ENCODE measurements at regions of chr16 and their contacts with region 1.

Region 1: DNA sequence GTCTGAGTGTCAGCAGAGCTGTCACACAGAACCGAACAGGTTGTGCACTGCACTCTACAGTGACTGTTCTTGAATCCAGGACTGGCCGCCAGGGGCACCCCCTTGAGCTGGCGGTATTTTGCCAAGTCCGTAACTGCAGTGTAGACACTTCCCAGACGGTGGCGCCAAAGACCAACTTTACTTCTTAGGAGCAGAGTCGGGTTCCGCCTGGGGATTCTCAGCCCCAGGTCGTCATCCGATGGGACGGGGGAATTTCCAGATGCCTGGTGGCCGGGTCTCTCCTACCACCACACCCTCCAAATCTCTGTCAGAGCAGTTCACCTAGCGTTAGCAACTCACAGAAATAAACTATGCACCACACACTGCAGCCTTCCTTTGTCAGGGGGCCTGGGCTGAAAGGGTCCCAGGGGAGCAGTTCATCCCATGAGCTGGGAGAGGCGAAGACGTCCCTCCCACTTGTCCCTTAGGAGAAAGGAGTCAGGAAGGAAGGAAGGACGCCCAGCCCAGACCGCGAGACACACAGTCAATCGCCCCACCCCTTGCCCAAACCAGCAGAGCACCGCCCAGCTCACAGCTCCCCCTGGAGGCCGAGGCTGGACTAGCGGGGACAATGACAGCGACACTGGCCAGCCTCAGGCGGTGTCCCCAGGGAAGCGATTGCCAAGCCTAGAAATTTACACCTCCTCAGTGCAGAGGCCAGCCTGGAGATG is 7.4 kb upstream of the RIPOR1 start:
- DNase-seq: peak; percentile 91 to 97 (median 92)
- ATAC-seq: peak; percentile 97
- H3K4me3 ChIP-seq: peak overlapping the region; percentile 45
- H3K27ac ChIP-seq: peak overlapping the region; percentile 76
- H3K4me1 ChIP-seq: peaks cover 7 to 21% of the 10 kb centered on the region in 2 experiments
- H3K27me3 ChIP-seq: no peaks in the 10 kb centered on the region
- CTCF ChIP-seq: peak; percentile 97 to 100 (median 100)
- EP300 ChIP-seq: peak; percentile 65
- POLR2A ChIP-seq: no peak
- RAD21 ChIP-seq: peak; percentile 90 to 95

Region 2: DNA sequence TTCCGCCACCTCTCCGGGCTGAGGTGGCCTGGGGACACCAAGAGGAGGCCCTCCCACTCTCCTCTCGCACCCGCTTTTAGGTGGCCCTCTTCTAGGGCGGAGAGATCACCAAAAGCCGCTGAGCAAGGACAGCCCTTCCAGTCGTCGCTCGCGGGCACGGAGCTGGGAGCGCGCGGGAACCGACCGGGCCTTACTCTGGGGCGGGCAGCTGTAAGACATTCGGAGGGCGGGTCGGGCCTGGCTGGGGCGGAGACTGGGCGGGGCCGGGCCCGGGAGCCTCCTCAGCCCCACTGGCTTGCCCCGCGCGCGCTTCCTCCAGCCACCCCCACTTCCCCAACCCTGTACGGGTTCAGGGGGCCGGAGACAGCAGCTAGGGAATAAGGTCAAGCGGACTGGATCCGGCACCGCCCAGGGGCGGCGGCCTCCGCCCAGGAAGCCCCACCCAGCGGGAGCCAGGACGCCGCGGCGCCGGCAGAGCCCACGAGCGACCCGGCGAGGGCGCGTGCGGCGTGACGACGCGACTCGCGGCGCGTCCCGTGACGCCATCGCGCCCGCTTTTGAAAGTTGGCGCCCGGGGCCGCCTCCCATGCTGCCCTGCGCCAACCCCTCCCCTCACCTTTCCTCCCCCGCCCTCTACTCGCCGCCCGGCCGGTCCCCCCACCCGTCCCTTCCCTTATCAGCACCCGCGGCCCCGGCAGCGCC is 40.7 kb after region 1 on chr16:
- CTCF ChIA-PET with region 1: interaction called, 17 read pairs
- POLR2A ChIA-PET with region 1: interaction called, 8 read pairs
- in situ Hi-C with region 1: no loop called
- intact Hi-C with region 1: loop called (anchors 2 kb)
- DNase-seq: peak; percentile 93 to 98 (median 97)
- ATAC-seq: peak; percentile 94
- H3K4me3 ChIP-seq: peak overlapping the region; percentile 97
- H3K27ac ChIP-seq: peak overlapping the region; percentile 99
- H3K4me1 ChIP-seq: peaks cover 15 to 27% of the 10 kb centered on the region in 2 experiments; a peak in 4 of 5 replicates
- H3K27me3 ChIP-seq: no peaks in the 10 kb centered on the region
- CTCF ChIP-seq: peak in 1 of 3 experiments; percentile 26; a peak in 1 of 6 replicates
- EP300 ChIP-seq: 0 out of 2 replicates have a peak, but pooled peaks have one; percentile 29
- POLR2A ChIP-seq: peak; percentile 92
- RAD21 ChIP-seq: no peak

Region 3: GRCh38 chr16:67667817-67668494 is 146.7 kb after region 1 on chr16:
- CTCF ChIA-PET with region 1: interaction called, 25 read pairs
- POLR2A ChIA-PET with region 1: interaction called, 3 read pairs
- in situ Hi-C with region 1: no loop called
- intact Hi-C with region 1: loop called (anchors 1 kb)
- DNase-seq: peak; percentile 85 to 90 (median 86)
- ATAC-seq: peak; percentile 89
- H3K4me3 ChIP-seq: no peak overlapping the region
- H3K27ac ChIP-seq: no peak overlapping the region
- H3K4me1 ChIP-seq: peaks cover 14 to 39% of the 10 kb centered on the region in 2 experiments
- H3K27me3 ChIP-seq: no peaks in the 10 kb centered on the region
- CTCF ChIP-seq: peak; percentile 93 to 99 (median 96)
- EP300 ChIP-seq: no peak
- POLR2A ChIP-seq: no peak
- RAD21 ChIP-seq: peak; percentile 74 to 84

Region 4: DNA sequence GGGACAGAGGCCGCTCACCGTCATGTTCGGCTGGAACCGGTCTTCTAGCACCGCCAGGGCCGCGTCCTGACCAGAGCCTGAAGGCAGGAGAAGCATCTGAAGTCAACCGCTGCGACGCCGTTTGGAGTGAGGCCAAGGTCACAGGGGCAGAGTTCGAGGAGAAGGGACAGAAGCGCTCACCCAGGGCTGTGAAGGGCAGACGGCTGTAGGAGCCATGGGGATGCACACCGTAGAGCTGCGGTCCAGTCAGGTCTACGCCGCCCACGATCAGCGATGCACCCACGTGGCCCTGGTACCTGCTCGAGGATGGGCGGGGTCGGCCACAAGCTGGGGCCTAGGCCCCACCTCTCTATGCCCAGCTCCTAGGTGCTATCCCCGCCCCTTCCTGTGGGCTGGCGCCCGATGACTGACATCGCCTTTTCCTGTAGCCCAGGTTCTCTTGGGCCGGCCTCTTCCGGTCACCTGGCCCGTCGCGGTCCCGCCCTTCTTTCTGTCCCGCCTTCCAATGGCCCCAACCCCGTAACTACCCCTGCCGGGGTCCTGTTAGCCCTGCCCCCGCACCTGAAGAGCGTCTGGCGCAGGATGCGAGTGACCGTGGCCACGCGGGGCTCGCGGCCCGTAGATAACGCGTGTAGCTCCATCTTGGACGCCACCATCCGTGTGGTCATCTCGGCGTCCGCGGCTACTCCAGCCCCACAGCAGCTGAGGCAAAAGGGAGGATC is 414.3 kb after region 1 on chr16:
- CTCF ChIA-PET with region 1: no interaction called
- POLR2A ChIA-PET with region 1: no interaction called
- in situ Hi-C with region 1: no loop called
- intact Hi-C with region 1: loop called (anchors 10 kb)
- DNase-seq: peak; percentile 98 to 99 (median 98)
- ATAC-seq: peak; percentile 94
- H3K4me3 ChIP-seq: peak overlapping the region; percentile 85
- H3K27ac ChIP-seq: peak overlapping the region; percentile 89
- H3K4me1 ChIP-seq: peaks cover 20 to 68% of the 10 kb centered on the region in 2 experiments
- H3K27me3 ChIP-seq: no peaks in the 10 kb centered on the region
- CTCF ChIP-seq: no peak; a peak in 1 of 6 replicates
- EP300 ChIP-seq: no peak
- POLR2A ChIP-seq: peak; percentile 92
- RAD21 ChIP-seq: no peak

Region 5: GRCh38 chr16:68548947-68549346 is 1027.7 kb after region 1 on chr16:
- CTCF ChIA-PET with region 1: no interaction called
- POLR2A ChIA-PET with region 1: no interaction called
- in situ Hi-C with region 1: no loop called
- intact Hi-C with region 1: no loop called
- DNase-seq: no peak
- ATAC-seq: no peak
- H3K4me3 ChIP-seq: no peak overlapping the region
- H3K27ac ChIP-seq: no peak overlapping the region
- H3K4me1 ChIP-seq: no peaks in the 10 kb centered on the region
- H3K27me3 ChIP-seq: no peaks in the 10 kb centered on the region; a peak in 2 of 5 replicates
- CTCF ChIP-seq: no peak
- EP300 ChIP-seq: no peak
- POLR2A ChIP-seq: no peak
- RAD21 ChIP-seq: no peak